Naive thymus-derived CD4-positive, alpha-beta T cell (primary cell): ENCODE measurements at regions of chr15 and their contacts with region 1.

Region 1: DNA sequence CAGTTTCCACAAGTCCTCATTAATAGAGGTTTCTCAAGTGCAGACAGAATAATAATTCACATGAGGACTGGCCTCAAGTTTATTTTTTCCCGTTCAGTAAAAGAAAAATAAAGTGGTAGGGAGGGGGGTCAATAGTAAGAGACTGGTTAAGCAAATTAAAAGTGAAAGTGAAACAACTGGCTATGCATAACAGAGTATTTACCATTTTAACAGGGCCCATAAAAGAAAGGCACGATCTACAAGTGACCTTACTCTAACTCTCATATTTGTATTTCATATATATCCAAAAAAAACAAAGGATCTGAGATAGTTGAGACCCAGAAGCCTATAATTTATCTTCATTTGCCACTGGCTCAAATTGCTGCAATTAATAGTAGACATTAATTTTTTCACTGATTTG is 686.3 kb downstream of the NTRK3 start:
- DNase-seq: peak in 2 of 9 donors; percentile 4 to 5
- ATAC-seq: no peak
- H3K4me3 ChIP-seq: no peak overlapping the region
- H3K4me3 Mint-ChIP-seq: peak overlapping the region in 9 of 10 donors; percentile 41 to 85 (median 74)
- H3K27ac ChIP-seq: no peak overlapping the region
- H3K27ac Mint-ChIP-seq: peak overlapping the region in 5 of 9 donors; percentile 4 to 70 (median 23)
- H3K4me1 ChIP-seq: peaks cover 0 to 6% of the 10 kb centered on the region in 2 donors
- H3K4me1 Mint-ChIP-seq: peaks cover 5 to 16% (median 11%) of the 10 kb centered on the region in 7 donors
- H3K27me3 ChIP-seq: no peaks in the 10 kb centered on the region
- H3K27me3 Mint-ChIP-seq: no peaks in the 10 kb centered on the region

Region 2: DNA sequence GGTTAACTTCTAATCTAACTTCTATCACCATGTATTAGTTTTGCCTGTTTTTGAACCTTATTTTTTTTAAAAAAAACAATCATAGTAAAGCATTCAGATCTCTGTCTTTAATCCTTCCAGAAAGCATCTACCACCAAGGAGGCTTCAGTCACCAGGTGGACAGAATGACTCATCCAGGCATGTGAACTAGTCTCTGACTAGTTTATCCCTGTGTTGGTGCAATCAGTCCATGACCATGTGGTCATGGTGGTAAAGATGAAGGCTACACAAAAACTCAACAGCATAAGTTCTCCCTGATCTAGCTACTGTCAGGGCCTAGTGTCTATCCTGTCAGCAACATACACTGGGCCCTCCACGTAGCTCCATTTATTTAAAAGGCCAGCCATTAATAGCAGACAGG is 739.9 kb before region 1 on chr15:
- CTCF ChIA-PET with region 1: no interaction called
- POLR2A ChIA-PET with region 1: no interaction called
- intact Hi-C with region 1: no loop called
- DNase-seq: no peak
- ATAC-seq: no peak
- H3K4me3 ChIP-seq: no peak overlapping the region
- H3K4me3 Mint-ChIP-seq: no peak overlapping the region
- H3K27ac ChIP-seq: no peak overlapping the region
- H3K27ac Mint-ChIP-seq: no peak overlapping the region
- H3K4me1 ChIP-seq: no peaks in the 10 kb centered on the region
- H3K4me1 Mint-ChIP-seq: no peaks in the 10 kb centered on the region
- H3K27me3 ChIP-seq: no peaks in the 10 kb centered on the region
- H3K27me3 Mint-ChIP-seq: peaks cover 0 to 3% (median 0%) of the 10 kb centered on the region in 5 donors

Region 3: GRCh38 chr15:87508086-87508485 is 62.1 kb before region 1 on chr15:
- CTCF ChIA-PET with region 1: no interaction called
- POLR2A ChIA-PET with region 1: no interaction called
- intact Hi-C with region 1: no loop called
- DNase-seq: no peak
- ATAC-seq: no peak
- H3K4me3 ChIP-seq: no peak overlapping the region
- H3K4me3 Mint-ChIP-seq: no peak overlapping the region
- H3K27ac ChIP-seq: no peak overlapping the region
- H3K27ac Mint-ChIP-seq: no peak overlapping the region
- H3K4me1 ChIP-seq: no peaks in the 10 kb centered on the region
- H3K4me1 Mint-ChIP-seq: no peaks in the 10 kb centered on the region
- H3K27me3 ChIP-seq: no peaks in the 10 kb centered on the region
- H3K27me3 Mint-ChIP-seq: peaks cover 0 to 12% (median 0%) of the 10 kb centered on the region in 5 donors

Region 4: DNA sequence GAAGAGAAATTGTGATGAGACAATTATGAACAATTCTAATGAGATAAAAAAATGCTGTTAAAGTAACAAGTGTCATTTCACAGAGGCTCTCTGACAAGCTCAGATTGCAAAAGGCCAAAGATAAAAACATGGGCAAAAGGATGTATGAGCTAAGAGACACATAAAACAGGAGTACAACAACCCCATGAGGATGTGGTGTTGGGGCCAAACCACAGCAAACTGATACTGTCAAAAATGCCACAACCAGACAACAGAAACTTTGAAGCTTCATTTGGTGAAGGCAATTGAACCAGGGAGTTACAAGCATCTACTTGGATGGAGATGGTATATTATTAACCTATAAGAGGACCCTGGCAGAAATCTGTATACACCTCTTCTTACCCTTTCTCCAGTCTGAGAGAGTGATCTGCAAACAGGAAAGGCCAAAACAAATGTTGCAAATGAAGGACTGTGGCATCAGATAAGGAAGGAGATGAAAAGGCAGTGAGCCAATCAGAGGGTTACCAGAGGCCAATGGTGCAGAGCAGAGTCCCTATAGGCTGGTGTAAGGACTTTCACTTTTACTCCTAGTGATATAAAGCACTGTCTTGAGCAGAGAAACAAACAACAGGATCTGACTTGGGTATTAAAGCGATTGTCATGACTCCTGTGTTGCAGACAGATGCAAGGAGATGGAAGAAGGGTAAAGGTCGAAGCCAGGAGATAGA is 27.3 kb after region 1 on chr15:
- CTCF ChIA-PET with region 1: no interaction called
- POLR2A ChIA-PET with region 1: no interaction called
- intact Hi-C with region 1: loop called in 1 of 2 experiments (anchors 2 kb)
- DNase-seq: peak in 7 of 9 donors; percentile 11 to 66 (median 29)
- ATAC-seq: peak; percentile 93
- H3K4me3 ChIP-seq: peak overlapping the region; percentile 17
- H3K4me3 Mint-ChIP-seq: peak overlapping the region; percentile 11 to 61 (median 50)
- H3K27ac ChIP-seq: no peak overlapping the region
- H3K27ac Mint-ChIP-seq: peak overlapping the region; percentile 44 to 87 (median 75)
- H3K4me1 ChIP-seq: peaks cover 11 to 15% of the 10 kb centered on the region in 2 donors
- H3K4me1 Mint-ChIP-seq: peaks cover 8 to 35% (median 28%) of the 10 kb centered on the region in 7 donors
- H3K27me3 ChIP-seq: no peaks in the 10 kb centered on the region
- H3K27me3 Mint-ChIP-seq: peaks cover 0 to 8% (median 0%) of the 10 kb centered on the region in 5 donors